ENCODE measurements at regions of chr3 and their contacts with region 1.

Region 1: DNA sequence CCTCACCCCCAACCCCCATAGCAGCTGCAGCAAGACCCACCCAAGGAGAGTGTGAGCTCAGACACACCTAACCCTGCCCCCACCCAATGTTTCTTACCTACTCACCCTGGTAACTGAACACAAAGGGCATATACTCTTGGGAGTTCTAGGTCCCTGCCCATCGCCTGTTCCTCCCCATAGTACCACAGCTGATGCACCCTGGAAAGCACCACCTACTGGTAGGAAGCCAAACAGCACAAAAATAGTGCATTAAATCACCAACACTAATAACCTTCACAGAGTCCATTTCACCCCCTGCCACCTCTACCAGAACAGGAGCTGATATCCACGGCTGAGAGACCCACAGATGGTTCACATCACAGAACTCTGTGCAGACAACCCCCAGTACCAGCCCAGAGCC is 245.2 kb downstream of the EFHB start:
- DNase-seq: no peak
- H3K4me3 ChIP-seq: no peak overlapping the region
- H3K27ac ChIP-seq: no peak overlapping the region
- H3K4me1 ChIP-seq: no peaks in the 10 kb centered on the region
- H3K27me3 ChIP-seq: no peaks in the 10 kb centered on the region
- CTCF ChIP-seq: peak; percentile 29 to 58 (median 32)
- EP300 ChIP-seq: no peak
- POLR2A ChIP-seq: no peak
- RAD21 ChIP-seq: peak; percentile 30 to 43

Region 2: GRCh38 chr3:19702416-19703078 is 13.8 kb after region 1 on chr3:
- CTCF ChIA-PET with region 1: interaction called, 14 read pairs
- POLR2A ChIA-PET with region 1: no interaction called
- DNase-seq: no peak
- H3K4me3 ChIP-seq: no peak overlapping the region; a peak in 1 of 8 replicates
- H3K27ac ChIP-seq: no peak overlapping the region
- H3K4me1 ChIP-seq: peaks cover 0 to 4% (median 2%) of the 10 kb centered on the region in 4 experiments; a peak in 2 of 7 replicates
- H3K27me3 ChIP-seq: no peaks in the 10 kb centered on the region
- CTCF ChIP-seq: no peak
- EP300 ChIP-seq: no peak
- POLR2A ChIP-seq: no peak
- RAD21 ChIP-seq: no peak

Region 3: GRCh38 chr3:19765954-19766353 is 77.2 kb after region 1 on chr3:
- CTCF ChIA-PET with region 1: no interaction called
- POLR2A ChIA-PET with region 1: no interaction called
- DNase-seq: no peak
- H3K4me3 ChIP-seq: no peak overlapping the region
- H3K27ac ChIP-seq: no peak overlapping the region
- H3K4me1 ChIP-seq: no peaks in the 10 kb centered on the region; a peak in 1 of 7 replicates
- H3K27me3 ChIP-seq: no peaks in the 10 kb centered on the region
- CTCF ChIP-seq: no peak
- EP300 ChIP-seq: no peak
- POLR2A ChIP-seq: no peak
- RAD21 ChIP-seq: no peak